MCF 10A (cell line): ENCODE measurements at regions of chr11 and their contacts with region 1.

Region 1: DNA sequence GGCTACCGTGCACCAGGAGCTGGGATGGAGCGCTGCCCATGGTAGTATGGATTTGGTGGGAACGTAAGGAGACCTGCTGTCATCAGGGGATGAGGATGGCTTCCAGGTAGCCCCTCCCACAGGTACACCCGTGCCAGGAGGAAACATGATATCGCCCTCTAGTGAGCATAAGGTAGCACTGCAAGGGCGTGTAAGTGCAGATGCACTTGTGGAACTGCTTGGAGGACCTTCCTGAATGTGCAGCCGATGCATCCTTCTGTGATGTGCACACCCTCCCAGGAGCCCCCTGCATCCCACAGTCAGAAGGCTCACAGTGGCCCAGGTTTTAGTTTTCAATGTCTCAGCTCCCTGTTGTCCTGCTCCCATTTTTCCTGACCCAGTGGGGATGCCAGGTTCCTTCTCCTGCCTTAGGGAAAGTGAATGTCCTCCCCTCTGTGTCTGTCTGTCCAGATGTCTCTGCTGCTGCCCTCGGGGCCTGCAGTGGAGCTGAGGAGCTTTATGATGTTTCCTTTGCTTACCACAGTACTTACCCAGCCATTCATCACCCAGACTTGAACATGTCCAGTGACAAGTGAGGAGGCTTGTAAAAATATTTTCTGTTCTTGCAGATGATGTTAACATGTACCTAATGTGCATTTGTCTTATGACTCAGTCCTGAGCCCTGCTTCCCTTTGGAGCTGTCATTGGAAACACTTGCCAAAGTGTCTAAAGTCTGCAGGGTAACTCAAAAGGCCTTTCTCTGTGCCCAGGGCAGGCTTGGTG is 49.2 kb downstream of the DBX1 start:
- DNase-seq: peak; percentile 82
- H3K4me3 Mint-ChIP-seq: peak overlapping the region; percentile 57
- H3K27ac Mint-ChIP-seq: peak overlapping the region; percentile 64
- H3K4me1 Mint-ChIP-seq: peaks cover 50% of the 10 kb centered on the region
- H3K27me3 Mint-ChIP-seq: no peaks in the 10 kb centered on the region
- CTCF ChIP-seq: peak; percentile 89

Region 2: DNA sequence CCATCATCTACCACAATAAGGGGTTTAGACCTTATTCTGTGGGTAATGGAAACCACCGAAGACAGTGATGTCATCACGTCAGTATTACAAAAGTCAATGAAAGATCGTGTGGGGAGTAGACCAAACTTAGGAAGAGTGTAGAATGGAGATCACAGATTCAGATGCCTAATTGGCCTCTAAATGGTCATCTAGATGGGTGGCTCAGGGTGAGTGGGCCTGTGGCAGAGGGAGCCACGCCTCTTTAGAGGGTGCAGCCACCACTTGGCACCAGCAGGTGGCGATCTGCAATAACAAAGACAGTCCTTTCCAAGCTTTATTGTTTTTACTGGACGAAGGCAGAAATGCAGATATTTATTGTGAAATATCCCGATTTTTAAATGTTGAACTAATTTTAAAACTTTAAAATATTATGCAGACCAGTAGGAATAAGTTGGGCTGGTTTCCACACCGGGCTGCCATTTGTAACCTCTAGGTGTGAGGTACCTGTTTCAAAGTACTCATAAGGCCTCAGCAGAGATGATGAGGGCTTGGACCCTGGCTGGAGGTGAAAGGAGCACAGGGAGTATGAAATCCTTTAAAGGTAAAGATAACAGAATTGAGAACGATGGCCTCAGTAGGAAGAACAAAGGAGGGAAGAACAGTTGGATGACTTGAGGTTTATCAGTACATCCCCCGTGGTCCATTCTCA is 172.8 kb before region 1 on chr11:
- CTCF ChIA-PET with region 1: interaction called, 49 read pairs
- POLR2A ChIA-PET with region 1: interaction called, 8 read pairs
- intact Hi-C with region 1: no loop called
- DNase-seq: peak; percentile 72
- H3K4me3 Mint-ChIP-seq: no peak overlapping the region
- H3K27ac Mint-ChIP-seq: peak overlapping the region; percentile 47
- H3K4me1 Mint-ChIP-seq: peaks cover 24% of the 10 kb centered on the region
- H3K27me3 Mint-ChIP-seq: no peaks in the 10 kb centered on the region
- CTCF ChIP-seq: peak; percentile 80

Region 3: DNA sequence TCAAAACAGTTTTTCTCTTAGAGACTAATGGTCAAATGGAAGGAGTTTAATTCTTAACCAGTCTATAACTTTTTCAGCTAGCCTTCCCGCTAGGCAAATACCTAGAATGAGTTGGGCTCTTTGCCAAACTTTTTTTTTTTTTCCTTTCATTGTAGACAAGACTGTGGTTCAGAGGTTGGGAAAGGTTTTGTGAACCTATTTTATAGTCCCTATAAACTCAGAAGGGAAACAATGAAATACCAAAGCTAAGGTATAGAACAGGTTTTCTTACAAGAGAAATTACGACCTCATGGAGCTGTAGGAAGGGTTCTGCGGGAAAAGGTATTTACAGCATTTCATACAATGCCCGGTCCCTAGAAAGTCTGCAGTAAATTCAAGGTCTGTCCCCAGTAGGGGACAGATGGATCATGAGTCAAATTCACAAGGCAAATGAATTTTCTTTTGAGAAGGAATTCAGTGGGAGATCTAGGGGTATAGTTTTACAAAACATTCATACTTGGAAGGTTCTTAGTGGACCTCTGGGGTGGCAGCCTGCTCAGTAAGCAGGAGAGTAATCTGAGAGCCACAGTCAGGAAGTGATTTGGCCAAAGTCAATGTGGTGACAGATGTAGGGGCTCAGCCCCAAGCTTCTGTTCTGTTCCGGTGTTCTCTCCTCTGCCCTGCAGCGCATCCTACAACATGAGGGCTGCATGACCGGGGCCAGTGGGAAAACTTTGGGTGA is 97.6 kb before region 1 on chr11:
- CTCF ChIA-PET with region 1: interaction called, 16 read pairs
- POLR2A ChIA-PET with region 1: interaction called, 27 read pairs
- intact Hi-C with region 1: no loop called
- DNase-seq: peak; percentile 67
- H3K4me3 Mint-ChIP-seq: no peak overlapping the region
- H3K27ac Mint-ChIP-seq: no peak overlapping the region
- H3K4me1 Mint-ChIP-seq: peaks cover 43% of the 10 kb centered on the region
- H3K27me3 Mint-ChIP-seq: no peaks in the 10 kb centered on the region
- CTCF ChIP-seq: no peak

Region 4: GRCh38 chr11:20050551-20051333 is 60.3 kb before region 1 on chr11:
- CTCF ChIA-PET with region 1: interaction called, 53 read pairs
- POLR2A ChIA-PET with region 1: interaction called, 95 read pairs
- intact Hi-C with region 1: no loop called
- DNase-seq: peak; percentile 77
- H3K4me3 Mint-ChIP-seq: peak overlapping the region; percentile 30
- H3K27ac Mint-ChIP-seq: peak overlapping the region; percentile 93
- H3K4me1 Mint-ChIP-seq: peaks cover 66% of the 10 kb centered on the region
- H3K27me3 Mint-ChIP-seq: no peaks in the 10 kb centered on the region
- CTCF ChIP-seq: no peak

Region 5: DNA sequence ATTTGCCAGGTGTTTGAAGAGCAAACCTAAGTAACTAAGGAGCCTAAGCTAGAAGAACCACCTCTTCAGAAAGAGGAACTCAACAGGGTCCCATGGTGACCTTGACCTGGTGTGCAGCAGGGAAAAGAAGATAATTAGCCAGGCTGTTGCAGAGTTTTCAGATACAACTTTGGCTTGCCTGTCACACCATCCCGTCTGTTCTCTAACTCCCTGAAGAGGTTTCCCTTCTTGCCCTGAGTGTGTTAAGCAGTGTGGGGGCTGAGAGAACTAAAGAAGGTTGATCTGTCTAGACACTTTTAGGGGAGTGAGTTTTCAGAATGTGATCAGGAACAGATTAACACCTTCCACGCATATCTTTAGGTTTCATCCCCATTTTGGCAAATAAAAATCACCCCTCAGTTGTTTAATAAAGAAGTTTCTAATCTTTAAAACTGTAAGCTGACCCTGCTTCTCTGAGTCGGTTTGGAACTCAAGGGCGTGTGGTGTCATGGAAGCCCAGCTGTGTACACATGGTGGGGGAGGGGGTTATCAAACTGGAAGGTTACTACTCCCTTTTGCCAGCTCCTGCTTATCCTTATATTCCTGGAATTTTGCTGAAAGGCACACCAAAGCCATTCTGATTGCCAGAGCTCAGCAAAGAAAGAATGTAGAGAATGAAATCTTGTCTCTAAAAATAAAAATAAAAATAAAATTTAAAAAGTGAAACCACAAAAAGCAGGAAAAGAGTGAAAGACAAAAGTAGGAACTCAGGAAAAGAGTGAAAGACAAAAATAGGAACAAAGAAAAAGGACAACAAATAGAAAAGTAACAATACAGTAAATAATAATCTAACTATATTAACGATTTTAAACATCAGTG is 21.1 kb before region 1 on chr11:
- CTCF ChIA-PET with region 1: interaction called, 11 read pairs
- POLR2A ChIA-PET with region 1: interaction called, 8 read pairs
- intact Hi-C with region 1: no loop called
- DNase-seq: no peak
- H3K4me3 Mint-ChIP-seq: no peak overlapping the region
- H3K27ac Mint-ChIP-seq: peak overlapping the region; percentile 39
- H3K4me1 Mint-ChIP-seq: peaks cover 9% of the 10 kb centered on the region
- H3K27me3 Mint-ChIP-seq: no peaks in the 10 kb centered on the region
- CTCF ChIP-seq: no peak

Region 6: DNA sequence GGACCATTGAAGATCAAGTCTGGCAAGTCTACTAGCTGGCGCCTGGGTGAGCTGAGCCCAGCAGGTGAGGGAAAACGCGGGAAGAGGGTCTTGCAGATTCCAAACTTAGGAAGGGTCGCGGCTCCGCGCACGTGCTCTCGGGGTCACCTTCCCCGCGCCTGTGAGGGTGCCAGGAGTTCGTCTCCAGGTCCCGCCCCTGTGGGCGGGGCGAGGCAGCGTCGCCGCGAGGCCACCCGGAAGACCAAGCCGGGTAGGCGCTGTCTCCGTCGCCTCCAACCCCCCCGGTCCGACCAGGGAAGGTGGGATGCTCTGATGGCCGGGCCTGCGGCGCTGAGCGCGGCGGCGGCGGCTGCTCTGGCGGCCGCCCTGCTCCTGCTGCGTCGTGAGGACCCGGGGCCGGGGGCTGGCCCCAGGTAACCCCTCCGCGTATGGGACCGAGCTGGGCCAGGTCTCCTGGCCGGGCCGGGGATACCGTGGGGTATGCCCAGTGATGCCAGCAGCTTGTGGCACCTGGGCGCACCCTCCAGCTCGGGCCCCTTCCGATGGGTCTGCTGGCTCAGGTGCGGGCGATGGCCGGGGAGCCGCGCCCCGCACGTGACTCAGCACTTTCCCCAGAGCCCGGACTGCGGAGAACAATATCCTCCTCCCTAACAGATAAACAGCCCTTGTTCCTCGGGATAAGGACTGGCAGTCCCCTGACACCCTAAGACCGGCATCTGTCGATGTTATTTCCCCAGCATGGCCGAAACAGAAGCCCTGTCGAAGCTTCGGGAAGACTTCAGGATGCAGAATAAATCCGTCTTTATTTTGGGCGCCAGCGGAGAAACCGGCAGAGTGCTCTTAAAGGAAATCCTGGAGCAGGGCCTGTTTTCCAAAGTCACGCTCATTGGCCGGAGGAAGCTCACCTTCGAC is 252.7 kb after region 1 on chr11 and contains the start of gene HTATIP2:
- CTCF ChIA-PET with region 1: interaction called, 3 read pairs
- POLR2A ChIA-PET with region 1: interaction called, 10 read pairs
- intact Hi-C with region 1: no loop called
- DNase-seq: peak; percentile 71
- H3K4me3 Mint-ChIP-seq: peak within 1 kb of the TSS; percentile 75
- H3K27ac Mint-ChIP-seq: peak within 1 kb of the TSS; percentile 93
- H3K4me1 Mint-ChIP-seq: peaks cover 32% of the 10 kb centered on the region
- H3K27me3 Mint-ChIP-seq: no peaks in the 10 kb centered on the region
- CTCF ChIP-seq: no peak
- total RNA-seq, gene HTATIP2: 42.5 and 55.8 TPM in 2 replicates